Gastrocnemius medialis (tissue), 4 donors: ENCODE measurements at regions of chr6 and their contacts with region 1.

Region 1: DNA sequence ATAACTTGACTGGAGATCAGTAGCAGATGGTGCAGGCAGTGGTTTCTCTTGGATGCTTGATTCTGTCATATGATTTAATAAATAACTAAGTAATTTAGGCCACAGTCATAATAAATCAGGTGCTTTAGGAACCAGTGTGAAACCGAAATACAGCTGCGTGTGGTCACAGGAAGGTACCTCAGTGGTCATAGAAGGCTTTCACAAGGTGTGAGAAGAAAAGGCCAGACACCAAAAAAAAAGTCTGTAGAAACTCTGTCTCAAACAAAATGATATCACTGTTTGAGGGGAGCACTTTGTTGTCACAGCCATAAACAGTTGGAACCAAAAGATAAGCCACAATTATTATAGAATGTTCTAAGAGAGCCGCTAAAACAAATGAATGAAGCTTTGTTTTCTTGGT is 56.5 kb downstream of the ARMC2 start:
- DNase-seq: no peak
- ATAC-seq: no peak
- H3K4me3 ChIP-seq: no peak overlapping the region
- H3K27ac ChIP-seq: no peak overlapping the region
- H3K4me1 ChIP-seq: no peaks in the 10 kb centered on the region
- H3K27me3 ChIP-seq: no peaks in the 10 kb centered on the region
- CTCF ChIP-seq: no peak
- POLR2A ChIP-seq: no peak

Region 2: DNA sequence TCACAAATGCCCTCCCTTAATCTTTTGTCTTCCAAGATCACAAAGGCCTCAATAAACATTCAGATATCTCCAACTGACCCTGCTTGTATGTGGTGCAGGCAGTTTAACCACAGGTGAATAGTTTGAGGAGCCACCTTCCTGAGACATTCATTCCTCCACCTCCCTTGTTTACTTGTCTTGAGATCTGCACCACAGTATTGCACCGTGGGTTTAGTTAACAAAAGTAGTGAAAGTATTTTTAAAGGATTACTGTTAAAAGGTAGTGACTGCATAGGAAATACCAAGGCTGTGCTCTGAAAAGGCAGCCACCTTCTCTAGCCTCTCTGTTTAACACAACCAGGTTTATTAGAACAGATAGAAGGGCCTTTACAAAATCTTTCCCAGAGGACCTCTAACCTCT is 143.4 kb after region 1 on chr6:
- in situ Hi-C with region 1: no loop called
- intact Hi-C with region 1: no loop called
- DNase-seq: no peak
- ATAC-seq: no peak
- H3K4me3 ChIP-seq: no peak overlapping the region
- H3K27ac ChIP-seq: peak overlapping the region; percentile 42 to 74 (median 58)
- H3K4me1 ChIP-seq: peaks cover 54 to 56% of the 10 kb centered on the region in 2 donors
- H3K27me3 ChIP-seq: no peaks in the 10 kb centered on the region
- CTCF ChIP-seq: no peak
- POLR2A ChIP-seq: no peak

Region 3: GRCh38 chr6:109059571-109060021 is 154.9 kb after region 1 on chr6:
- in situ Hi-C with region 1: loop called in 1 of 4 experiments (anchors 10 kb)
- intact Hi-C with region 1: no loop called
- DNase-seq: no peak
- ATAC-seq: peak; percentile 57 to 67
- H3K4me3 ChIP-seq: no peak overlapping the region
- H3K27ac ChIP-seq: peak overlapping the region; percentile 72 to 78 (median 74)
- H3K4me1 ChIP-seq: peaks cover 83 to 97% of the 10 kb centered on the region in 2 donors
- H3K27me3 ChIP-seq: no peaks in the 10 kb centered on the region
- CTCF ChIP-seq: peak in 2 of 5 experiments; percentile 23 to 35
- POLR2A ChIP-seq: no peak